ENCODE measurements at regions of chr2 and their contacts with region 1.

Region 1: GRCh38 chr2:54115284-54116137 is at the start of gene ACYP2:
- DNase-seq: peak; percentile 89
- ATAC-seq: peak; percentile 84
- H3K4me3 Mint-ChIP-seq: peak within 1 kb of the TSS; percentile 97
- H3K27ac Mint-ChIP-seq: peak within 1 kb of the TSS; percentile 100
- H3K4me1 Mint-ChIP-seq: peaks cover 26% of the 10 kb centered on the region
- H3K27me3 Mint-ChIP-seq: no peaks in the 10 kb centered on the region
- CTCF ChIP-seq: no peak
- total RNA-seq, gene ACYP2: 14.9 and 15.9 TPM in 2 replicates

Region 2: GRCh38 chr2:53786705-53787612 is 328.6 kb before region 1 on chr2 and contains the starts of genes ASB3 and ERLEC1:
- CTCF ChIA-PET with region 1: no interaction called
- POLR2A ChIA-PET with region 1: interaction called, 3 read pairs
- intact Hi-C with region 1: loop called (anchors 2 kb)
- DNase-seq: peak; percentile 82
- ATAC-seq: peak; percentile 93
- H3K4me3 Mint-ChIP-seq: peak within 1 kb of the TSS; percentile 91
- H3K27ac Mint-ChIP-seq: peak within 1 kb of the TSS; percentile 94
- H3K4me1 Mint-ChIP-seq: peaks cover 50% of the 10 kb centered on the region
- H3K27me3 Mint-ChIP-seq: no peaks in the 10 kb centered on the region
- CTCF ChIP-seq: no peak
- total RNA-seq, gene ASB3: 16.3 and 22.8 TPM in 2 replicates
- total RNA-seq, gene ERLEC1: 16.8 and 18.2 TPM in 2 replicates

Region 3: GRCh38 chr2:54330162-54330925 is 214.8 kb after region 1 on chr2:
- CTCF ChIA-PET with region 1: no interaction called
- POLR2A ChIA-PET with region 1: interaction called, 3 read pairs
- intact Hi-C with region 1: loop called (anchors 2 kb)
- DNase-seq: peak; percentile 77
- ATAC-seq: peak; percentile 96
- H3K4me3 Mint-ChIP-seq: peak overlapping the region; percentile 89
- H3K27ac Mint-ChIP-seq: peak overlapping the region; percentile 70
- H3K4me1 Mint-ChIP-seq: peaks cover 21% of the 10 kb centered on the region
- H3K27me3 Mint-ChIP-seq: peaks cover 13% of the 10 kb centered on the region
- CTCF ChIP-seq: no peak

Region 4: GRCh38 chr2:55282110-55282917 is 1166.8 kb after region 1 on chr2:
- CTCF ChIA-PET with region 1: no interaction called
- POLR2A ChIA-PET with region 1: no interaction called
- intact Hi-C with region 1: loop called (anchors 5 kb)
- DNase-seq: peak; percentile 83
- ATAC-seq: peak; percentile 99
- H3K4me3 Mint-ChIP-seq: peak overlapping the region; percentile 88
- H3K27ac Mint-ChIP-seq: peak overlapping the region; percentile 93
- H3K4me1 Mint-ChIP-seq: peaks cover 28% of the 10 kb centered on the region
- H3K27me3 Mint-ChIP-seq: no peaks in the 10 kb centered on the region
- CTCF ChIP-seq: no peak

Measured in activated B cell treated with CpG ODN at 0.5 μM for 24 hours (primary cell).